Cardiac septum (tissue), 1 donor: ENCODE measurements at regions of chr19 and their contacts with region 1.

Region 1: DNA sequence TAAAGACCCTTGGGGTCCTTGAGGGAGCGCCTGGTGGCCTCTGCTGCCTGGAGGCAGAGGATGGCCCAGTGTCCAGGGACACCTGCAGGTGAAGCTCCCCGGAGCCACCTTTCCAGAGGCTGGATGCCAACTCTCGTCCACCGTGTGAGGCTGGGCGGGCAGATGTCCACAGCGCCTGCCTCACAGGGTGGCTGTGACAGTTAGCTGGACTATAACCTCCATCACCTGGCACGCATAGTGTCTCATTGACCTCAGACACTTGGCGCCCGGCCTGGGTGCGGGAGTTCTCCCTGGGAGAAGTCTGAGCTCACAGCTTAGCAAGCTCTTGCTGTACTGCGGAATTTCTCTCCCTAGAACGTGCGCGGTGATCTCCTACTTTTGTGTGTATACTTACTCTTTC is 9.8 kb downstream of the BICRA start:
- DNase-seq: peak; percentile 82

Region 2: DNA sequence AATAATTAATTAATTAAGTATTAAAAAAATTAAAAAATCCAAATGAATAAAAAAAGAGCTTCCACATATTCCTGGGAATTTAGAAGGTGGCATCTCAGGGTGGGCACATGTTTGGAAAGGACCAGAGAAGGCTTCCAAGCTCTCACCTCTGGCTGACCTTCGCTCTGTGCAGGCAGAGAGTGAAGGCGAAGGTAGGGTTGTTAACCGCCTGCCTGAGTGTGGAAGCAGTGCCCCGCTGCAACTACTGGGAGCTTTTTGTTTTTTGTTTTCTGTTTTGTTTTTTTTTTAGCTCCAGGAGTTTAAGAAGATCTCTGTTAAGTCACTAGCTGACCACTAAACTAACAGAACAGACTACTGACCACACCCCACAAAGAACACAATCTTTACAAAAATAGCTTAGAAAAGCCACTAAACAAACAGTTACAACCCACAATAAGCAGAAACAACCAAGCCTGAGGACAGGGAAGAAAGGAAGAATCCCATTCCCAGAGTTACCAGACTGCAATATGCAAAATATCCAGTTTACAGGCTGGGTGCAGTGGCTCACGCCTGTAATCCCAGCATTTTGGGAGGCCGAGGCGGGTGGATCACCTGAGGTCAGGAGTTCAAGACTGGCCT is 57.2 kb before region 1 on chr19:
- intact Hi-C with region 1: no loop called
- DNase-seq: no peak

Region 3: GRCh38 chr19:47587295-47587694 is 31.5 kb before region 1 on chr19:
- intact Hi-C with region 1: no loop called
- DNase-seq: no peak

Region 4: DNA sequence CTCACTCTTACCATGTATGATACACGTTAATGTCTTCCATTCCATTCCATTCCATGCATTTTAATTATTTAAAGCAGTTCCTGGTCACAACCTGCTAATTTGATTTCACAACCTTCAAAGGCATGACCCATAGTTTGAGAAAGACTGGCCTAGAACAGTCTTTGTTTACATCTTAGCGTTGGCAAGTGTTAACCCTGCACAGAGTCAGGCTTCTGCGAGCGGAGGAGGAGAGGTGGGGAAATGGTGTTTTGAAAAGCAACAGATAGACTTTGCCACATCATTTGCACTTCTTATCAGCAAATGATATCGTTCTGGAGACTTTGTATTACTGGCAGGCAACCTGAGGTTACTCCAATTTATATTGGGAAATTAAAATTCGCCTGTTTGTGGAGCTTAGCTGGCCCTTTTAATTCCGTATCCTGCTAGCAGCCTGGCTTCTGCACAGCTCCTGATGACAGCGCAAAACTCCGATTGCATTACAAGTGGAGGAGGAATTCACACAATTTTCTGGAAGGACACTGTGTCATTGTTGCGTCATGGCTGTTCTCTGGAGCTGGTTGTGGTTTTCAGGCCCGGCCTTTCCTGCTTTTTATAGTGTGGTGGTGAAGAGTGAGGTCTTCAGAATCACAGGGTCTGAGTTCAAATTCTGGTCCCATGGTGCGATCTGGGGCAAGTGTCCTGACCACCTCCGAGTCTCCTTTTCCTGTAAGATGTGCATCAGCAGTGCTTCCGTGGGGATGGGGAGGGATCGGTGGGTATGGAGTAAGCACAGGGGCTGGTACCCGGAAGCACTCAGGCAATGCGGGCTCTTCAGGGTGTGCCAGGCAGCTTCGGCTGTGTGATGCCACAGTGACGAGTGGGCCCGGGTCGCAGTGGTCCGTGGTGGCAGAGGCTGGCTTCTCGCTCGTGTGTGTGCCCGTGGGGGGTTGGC is 45.3 kb after region 1 on chr19:
- intact Hi-C with region 1: loop called (anchors 5 kb)
- DNase-seq: no peak

Region 5: GRCh38 chr19:47676811-47677210 is 58.0 kb after region 1 on chr19:
- intact Hi-C with region 1: no loop called
- DNase-seq: no peak